HEK293 (cell line): ENCODE measurements at regions of chr20 and their contacts with region 1.

Region 1: GRCh38 chr20:44367746-44368145 is 12.2 kb downstream of the HNF4A start:
- H3K4me3 ChIP-seq: no peak overlapping the region
- H3K27ac ChIP-seq: no peak overlapping the region
- H3K4me1 ChIP-seq: no peaks in the 10 kb centered on the region
- CTCF ChIP-seq: no peak

Region 2: DNA sequence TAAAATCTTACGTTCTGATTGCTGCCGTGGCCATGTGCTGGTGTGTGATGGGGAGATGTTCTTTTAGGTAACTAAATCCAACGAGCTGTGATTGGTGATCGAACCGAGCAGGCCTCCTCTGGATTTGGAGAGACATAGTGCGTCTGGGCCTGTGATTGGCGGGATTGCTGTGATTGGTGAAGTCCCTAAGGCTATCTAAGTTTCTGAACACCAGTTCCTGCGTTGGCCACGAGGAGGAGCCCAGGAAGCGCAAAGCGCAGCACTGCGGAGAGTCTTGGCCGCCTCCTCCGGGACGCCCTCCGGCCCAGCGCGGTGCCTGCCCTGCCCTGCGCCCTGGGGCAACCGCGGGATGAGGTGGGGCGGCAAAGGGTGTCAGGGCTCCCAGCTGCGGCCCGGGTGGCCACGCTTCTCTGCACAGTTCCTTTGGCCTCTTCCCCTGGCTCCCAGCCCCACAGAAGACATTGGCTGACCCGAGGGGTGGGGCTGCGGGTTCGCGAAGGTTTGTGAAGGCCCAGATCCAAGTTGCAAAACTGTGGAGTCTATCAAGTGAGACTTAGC is 20.8 kb after region 1 on chr20:
- CTCF ChIA-PET with region 1: interaction called, 13 read pairs
- POLR2A ChIA-PET with region 1: no interaction called
- H3K4me3 ChIP-seq: no peak overlapping the region
- H3K27ac ChIP-seq: no peak overlapping the region
- H3K4me1 ChIP-seq: no peaks in the 10 kb centered on the region
- CTCF ChIP-seq: peak; percentile 69; the same call in 1 of the 2 replicates